PC-9 (cell line): ENCODE measurements at regions of chr17 and their contacts with region 1.

Region 1: DNA sequence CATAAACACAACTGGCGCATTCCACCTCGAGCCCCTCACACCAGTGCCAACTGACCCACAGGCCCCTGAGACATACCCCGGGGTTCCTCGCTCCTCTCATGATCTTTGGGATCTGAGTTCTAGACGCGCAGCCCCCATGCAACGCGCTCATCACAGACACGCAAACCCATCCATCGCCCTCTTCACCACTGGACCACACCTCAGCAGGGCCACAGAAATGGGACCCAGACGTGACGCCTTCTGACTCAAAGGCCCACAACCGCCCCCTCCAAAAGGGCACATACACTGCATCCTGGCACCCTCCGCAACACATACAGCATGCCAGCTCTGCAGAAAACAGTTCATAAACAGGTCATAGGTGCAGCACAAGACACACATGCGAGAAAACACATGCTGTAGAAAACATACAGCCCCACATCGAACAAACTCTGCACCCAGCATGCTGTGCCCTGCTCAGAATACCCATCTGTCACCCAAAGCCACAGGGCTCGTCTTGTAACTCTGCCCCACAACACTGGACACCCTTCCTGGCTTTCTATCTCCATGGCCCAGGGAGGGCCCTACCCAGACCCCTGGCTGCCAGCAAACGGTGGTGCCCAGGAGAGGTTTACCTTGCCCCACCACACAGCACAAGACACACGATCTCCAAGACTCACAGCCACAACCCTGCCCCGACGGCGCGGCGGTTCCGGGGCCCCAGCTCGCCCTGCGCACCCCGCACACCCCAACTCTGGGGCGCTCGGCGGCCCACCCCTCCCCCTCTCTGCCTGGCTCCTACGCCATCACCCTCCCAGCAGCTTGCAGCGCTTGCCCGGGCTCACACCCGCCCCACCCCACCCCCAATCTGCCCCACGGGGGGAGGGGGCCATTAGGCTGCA is 916 bp downstream of the ZBTB4 start:
- DNase-seq: peak in 1 of 2 experiments; percentile 45
- H3K4me3 ChIP-seq: peak overlapping the region; percentile 76
- H3K27ac ChIP-seq: no peak overlapping the region
- H3K4me1 ChIP-seq: peaks cover 37% of the 10 kb centered on the region
- H3K27me3 ChIP-seq: no peaks in the 10 kb centered on the region
- CTCF ChIP-seq: no peak

Region 2: GRCh38 chr17:7361906-7362305 is 116.6 kb before region 1 on chr17:
- CTCF ChIA-PET with region 1: no interaction called
- POLR2A ChIA-PET with region 1: interaction called, 11 read pairs
- intact Hi-C with region 1: no loop called
- DNase-seq: no peak
- H3K4me3 ChIP-seq: no peak overlapping the region
- H3K27ac ChIP-seq: no peak overlapping the region
- H3K4me1 ChIP-seq: no peaks in the 10 kb centered on the region
- H3K27me3 ChIP-seq: no peaks in the 10 kb centered on the region
- CTCF ChIP-seq: no peak

Region 3: GRCh38 chr17:7620835-7621234 is 142.3 kb after region 1 on chr17:
- CTCF ChIA-PET with region 1: no interaction called
- POLR2A ChIA-PET with region 1: interaction called, 11 read pairs
- intact Hi-C with region 1: no loop called
- DNase-seq: no peak
- H3K4me3 ChIP-seq: no peak overlapping the region
- H3K27ac ChIP-seq: no peak overlapping the region
- H3K4me1 ChIP-seq: no peaks in the 10 kb centered on the region
- H3K27me3 ChIP-seq: no peaks in the 10 kb centered on the region
- CTCF ChIP-seq: no peak

Region 4: DNA sequence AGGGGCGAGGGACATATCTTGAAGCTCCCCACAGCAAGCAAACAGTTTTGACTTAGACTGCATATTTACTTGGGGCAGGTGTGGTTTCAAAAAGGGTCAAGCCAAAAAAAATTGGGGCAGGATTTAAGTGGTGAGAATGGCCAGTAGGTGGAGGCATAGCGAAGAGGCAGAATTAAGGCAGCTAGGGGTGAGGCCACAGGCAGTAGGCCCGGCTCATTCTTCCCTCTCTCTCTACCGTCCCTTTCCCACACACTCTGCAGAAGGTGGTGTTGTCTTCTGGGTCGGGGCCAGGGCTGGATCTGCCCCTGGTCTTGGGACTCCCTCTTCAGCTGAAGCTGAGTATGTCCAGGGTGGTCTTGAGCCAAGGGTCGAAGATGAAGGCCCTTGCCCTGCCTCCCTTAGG is 154.0 kb after region 1 on chr17:
- CTCF ChIA-PET with region 1: no interaction called
- POLR2A ChIA-PET with region 1: no interaction called
- intact Hi-C with region 1: no loop called
- DNase-seq: peak in 1 of 2 experiments; percentile 38
- H3K4me3 ChIP-seq: no peak overlapping the region
- H3K27ac ChIP-seq: no peak overlapping the region
- H3K4me1 ChIP-seq: no peaks in the 10 kb centered on the region
- H3K27me3 ChIP-seq: no peaks in the 10 kb centered on the region
- CTCF ChIP-seq: peak; percentile 54; the same call in 1 of the 2 replicates